Panc1 (cell line): ENCODE measurements at regions of chr5 and their contacts with region 1.

Region 1: DNA sequence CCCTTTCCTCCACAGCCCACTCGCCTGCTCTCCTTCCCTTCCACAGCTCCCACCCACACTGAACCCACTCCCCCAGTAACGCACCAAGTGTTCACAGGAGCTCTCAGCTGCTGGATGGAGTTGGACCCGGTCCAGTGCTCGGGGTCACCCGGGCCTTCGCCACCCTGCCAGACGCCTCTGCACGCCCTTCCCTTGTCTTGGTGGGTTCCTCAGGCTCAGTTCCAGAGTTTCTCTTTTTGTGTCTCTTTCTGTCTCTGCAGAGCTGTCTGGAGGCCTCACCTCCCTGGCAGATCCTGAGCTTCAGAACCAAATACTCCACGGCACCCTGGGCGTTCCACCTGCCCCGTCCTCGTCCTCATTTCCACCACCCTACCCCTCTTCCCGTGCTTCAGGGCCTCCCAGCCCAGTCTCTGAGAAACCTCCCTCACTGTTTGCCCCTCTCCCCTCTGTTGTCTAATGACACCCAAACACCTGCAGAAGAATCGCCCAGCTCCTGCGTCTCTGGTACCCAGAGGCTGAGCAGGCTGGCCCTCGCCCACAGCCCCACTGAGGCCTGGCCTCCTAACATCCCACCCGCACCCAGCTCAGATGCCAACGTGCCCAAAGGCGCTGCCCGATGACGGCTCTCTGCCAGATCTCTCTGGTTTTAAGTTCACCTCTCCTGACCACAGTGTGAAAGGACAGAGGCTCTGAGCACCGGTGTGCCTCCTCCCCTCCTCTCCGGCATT is 74.3 kb downstream of the COL23A1 start:
- DNase-seq: no peak
- ATAC-seq: no peak
- H3K4me3 ChIP-seq: no peak overlapping the region
- H3K27ac ChIP-seq: no peak overlapping the region
- H3K4me1 ChIP-seq: no peaks in the 10 kb centered on the region
- H3K27me3 ChIP-seq: peaks cover 13% of the 10 kb centered on the region
- CTCF ChIP-seq: no peak

Region 2: GRCh38 chr5:178464431-178465048 is 51.4 kb before region 1 on chr5:
- CTCF ChIA-PET with region 1: no interaction called
- POLR2A ChIA-PET with region 1: interaction called, 10 read pairs
- in situ Hi-C with region 1: no loop called
- intact Hi-C with region 1: no loop called
- DNase-seq: no peak
- ATAC-seq: no peak
- H3K4me3 ChIP-seq: no peak overlapping the region
- H3K27ac ChIP-seq: no peak overlapping the region
- H3K4me1 ChIP-seq: no peaks in the 10 kb centered on the region
- H3K27me3 ChIP-seq: no peaks in the 10 kb centered on the region
- CTCF ChIP-seq: no peak

Region 3: DNA sequence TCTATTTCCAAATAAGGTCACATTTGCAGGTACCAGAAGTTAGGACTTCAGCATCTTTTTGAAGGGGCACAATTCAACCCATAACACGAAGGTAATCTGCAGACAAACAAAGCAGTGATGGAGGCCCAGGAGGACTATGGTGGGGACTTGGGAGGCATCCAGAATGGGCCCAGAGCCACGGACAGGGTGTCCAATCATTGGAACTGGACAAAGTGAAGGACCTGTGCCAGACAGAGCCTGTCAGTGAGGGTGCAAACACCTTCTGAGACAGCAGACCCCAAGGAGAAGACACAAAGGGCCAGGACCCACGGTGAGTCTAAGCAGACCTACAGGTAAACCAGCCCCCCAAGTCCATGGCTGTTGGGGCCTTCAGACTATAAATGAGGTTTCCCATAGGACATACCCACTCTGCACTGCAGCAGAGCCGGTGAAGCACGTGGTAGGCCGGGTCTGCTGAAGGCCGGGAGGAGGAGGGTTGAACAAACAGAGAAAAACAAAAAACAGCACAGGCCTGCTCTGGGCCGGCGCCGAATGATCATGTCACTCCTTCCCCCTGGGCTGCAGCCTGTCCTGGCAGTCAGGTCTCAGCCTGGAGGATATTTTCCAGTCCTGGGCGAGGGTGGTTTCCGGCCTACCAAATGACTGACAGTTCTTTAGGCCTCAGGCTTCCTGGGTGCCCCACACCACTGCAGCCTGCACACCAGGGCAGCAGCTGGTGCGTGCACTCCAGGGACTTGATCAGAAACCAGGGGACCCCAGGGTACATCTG is 10.1 kb before region 1 on chr5:
- CTCF ChIA-PET with region 1: no interaction called
- POLR2A ChIA-PET with region 1: interaction called, 12 read pairs
- in situ Hi-C with region 1: no loop called
- intact Hi-C with region 1: no loop called
- DNase-seq: no peak
- ATAC-seq: no peak
- H3K4me3 ChIP-seq: no peak overlapping the region
- H3K27ac ChIP-seq: no peak overlapping the region
- H3K4me1 ChIP-seq: no peaks in the 10 kb centered on the region
- H3K27me3 ChIP-seq: no peaks in the 10 kb centered on the region
- CTCF ChIP-seq: no peak